ENCODE measurements at regions of chr4 and their contacts with region 1.

Region 1: GRCh38 chr4:1726146-1726934 is 5.0 kb downstream of the TACC3 start:
- DNase-seq: peak; percentile 64 to 88
- ATAC-seq: peak; percentile 67 to 74
- H3K4me3 ChIP-seq: no peak overlapping the region
- H3K27ac ChIP-seq: peak overlapping the region in 3 of 4 donors; percentile 35 to 65 (median 61)
- H3K4me1 ChIP-seq: peaks cover 9 to 11% of the 10 kb centered on the region in 2 donors
- H3K27me3 ChIP-seq: no peaks in the 10 kb centered on the region
- CTCF ChIP-seq: peak; percentile 86 to 98 (median 93)
- POLR2A ChIP-seq: no peak

Region 2: DNA sequence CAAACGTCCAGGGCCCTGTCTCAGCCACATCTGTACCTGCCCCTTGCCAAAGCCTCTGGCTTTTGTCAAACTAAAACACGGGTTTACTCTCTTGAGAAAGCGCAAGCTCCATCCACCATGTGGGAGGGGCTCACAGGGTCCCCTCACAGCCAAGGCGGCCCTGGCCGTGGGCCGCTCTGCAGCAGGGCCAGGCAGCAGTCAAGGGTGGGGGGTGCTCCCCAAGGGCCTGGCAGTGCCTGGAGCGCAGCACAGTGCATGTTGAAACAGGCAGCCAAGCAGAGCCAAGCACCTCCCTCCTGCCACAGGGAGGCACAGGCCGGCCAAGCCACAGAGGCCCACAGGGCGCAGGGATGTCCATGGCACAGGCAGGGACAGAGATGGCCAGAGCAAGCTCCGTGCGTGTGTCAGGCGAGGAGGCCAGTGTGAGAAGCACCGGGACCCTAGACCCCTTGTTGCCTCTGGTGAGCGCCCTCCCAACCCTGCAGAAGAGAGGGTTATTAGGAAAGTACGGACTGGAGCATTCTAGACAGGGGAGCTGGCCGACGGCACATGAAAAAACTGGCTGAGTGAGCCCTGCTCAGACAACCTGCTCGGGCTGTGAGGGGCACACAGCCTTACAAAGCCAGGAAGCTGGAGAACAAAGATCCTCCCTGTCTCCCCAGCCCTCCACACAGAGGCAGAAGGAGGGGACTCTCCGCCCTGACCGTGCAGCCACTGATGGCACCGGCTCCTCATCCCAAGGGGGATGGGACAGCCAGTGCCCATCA is 81.3 kb before region 1 on chr4:
- in situ Hi-C with region 1: no loop called
- intact Hi-C with region 1: no loop called
- DNase-seq: no peak
- ATAC-seq: peak in 1 of 2 donors; percentile 46
- H3K4me3 ChIP-seq: no peak overlapping the region
- H3K27ac ChIP-seq: no peak overlapping the region
- H3K4me1 ChIP-seq: no peaks in the 10 kb centered on the region
- H3K27me3 ChIP-seq: no peaks in the 10 kb centered on the region
- CTCF ChIP-seq: no peak
- POLR2A ChIP-seq: no peak

Region 3: GRCh38 chr4:1683736-1684505 is 42.4 kb before region 1 on chr4 and contains the start of gene FAM53A:
- in situ Hi-C with region 1: loop called in 1 of 4 experiments (anchors 5 kb)
- intact Hi-C with region 1: no loop called
- DNase-seq: peak in 1 of 2 donors; percentile 79
- ATAC-seq: peak; percentile 85 to 86
- H3K4me3 ChIP-seq: peak within 1 kb of the TSS; percentile 62 to 85 (median 71)
- H3K27ac ChIP-seq: peak within 1 kb of the TSS; percentile 68 to 86 (median 80)
- H3K4me1 ChIP-seq: peaks cover 0 to 11% of the 10 kb centered on the region in 2 donors
- H3K27me3 ChIP-seq: no peaks in the 10 kb centered on the region
- CTCF ChIP-seq: peak in 4 of 5 experiments; percentile 17 to 39 (median 26)
- POLR2A ChIP-seq: peak; percentile 64 to 68
- total RNA-seq, gene FAM53A: 1.8 to 5.2 (median 2.8) TPM

Region 4: GRCh38 chr4:1693129-1693896 is 33.0 kb before region 1 on chr4:
- in situ Hi-C with region 1: loop called in 2 of 4 experiments (anchors 5 kb)
- intact Hi-C with region 1: loop called (anchors 1 kb)
- DNase-seq: peak; percentile 66 to 80
- ATAC-seq: peak; percentile 92 to 98
- H3K4me3 ChIP-seq: peak overlapping the region in 1 of 4 donors; percentile 33
- H3K27ac ChIP-seq: peak overlapping the region; percentile 48 to 68 (median 60)
- H3K4me1 ChIP-seq: peaks cover 13 to 14% of the 10 kb centered on the region in 2 donors
- H3K27me3 ChIP-seq: no peaks in the 10 kb centered on the region
- CTCF ChIP-seq: peak; percentile 90 to 94 (median 91)
- POLR2A ChIP-seq: no peak

Region 5: GRCh38 chr4:1712216-1713002 is 13.9 kb before region 1 on chr4 and contains the start of gene SLBP:
- in situ Hi-C with region 1: no loop called
- intact Hi-C with region 1: loop called (anchors 1 kb)
- DNase-seq: peak; percentile 93 to 94
- ATAC-seq: peak; percentile 87 to 89
- H3K4me3 ChIP-seq: peak within 1 kb of the TSS; percentile 66 to 77 (median 74)
- H3K27ac ChIP-seq: peak within 1 kb of the TSS; percentile 91 to 96 (median 95)
- H3K4me1 ChIP-seq: peaks cover 18 to 25% of the 10 kb centered on the region in 2 donors
- H3K27me3 ChIP-seq: no peaks in the 10 kb centered on the region
- CTCF ChIP-seq: peak in 1 of 5 experiments; percentile 24
- POLR2A ChIP-seq: peak; percentile 94 to 95
- total RNA-seq, gene SLBP: 17.0 to 25.6 (median 21.0) TPM

Region 6: DNA sequence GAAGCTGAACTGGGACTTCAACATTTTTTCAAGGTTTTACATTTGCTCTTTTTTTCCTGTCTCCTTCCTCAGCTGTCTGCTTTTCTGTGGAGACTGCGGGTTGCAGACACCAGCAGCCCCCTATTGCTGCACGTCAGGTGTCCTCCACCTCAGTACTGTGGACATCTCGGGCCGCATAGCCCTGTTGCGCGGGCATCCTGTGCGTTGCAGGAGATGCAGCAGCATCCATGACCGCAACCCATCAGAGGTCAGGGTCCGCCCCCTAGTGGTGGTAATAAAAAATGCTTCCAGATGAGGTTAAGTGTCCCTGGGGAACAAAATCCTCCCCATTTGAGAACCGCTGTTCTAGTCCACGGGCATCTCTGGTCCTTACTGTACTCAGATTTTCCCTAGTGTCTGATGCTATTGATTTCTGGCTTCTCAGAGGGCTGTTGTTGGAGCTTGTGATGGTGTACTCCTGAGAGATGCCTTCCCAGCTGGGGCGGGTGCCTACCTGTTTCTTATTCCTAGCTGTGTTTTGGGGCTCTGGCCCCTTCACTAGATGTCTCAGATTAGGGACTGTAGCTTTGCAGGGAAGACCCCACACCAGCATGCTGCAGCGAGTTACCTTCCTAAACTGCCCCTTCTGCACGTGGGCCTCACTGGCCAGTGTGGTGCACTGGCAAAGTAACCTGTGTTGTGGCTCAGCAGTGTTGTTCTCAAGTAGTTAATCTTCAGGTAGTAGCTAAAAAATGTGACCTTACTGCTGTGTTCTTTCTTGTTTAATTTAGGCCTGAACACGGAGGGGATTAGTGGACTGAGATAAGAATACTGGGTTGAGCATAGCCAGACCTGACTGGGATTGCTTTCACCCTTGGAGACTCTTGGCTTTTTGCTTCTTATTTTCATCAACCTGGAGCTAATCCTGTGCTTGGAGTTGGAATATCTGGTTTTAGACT is 173.1 kb after region 1 on chr4:
- in situ Hi-C with region 1: loop called in 1 of 4 experiments (anchors 25 kb)
- intact Hi-C with region 1: no loop called
- DNase-seq: peak; percentile 42 to 54
- ATAC-seq: peak; percentile 86 to 94
- H3K4me3 ChIP-seq: no peak overlapping the region
- H3K27ac ChIP-seq: no peak overlapping the region
- H3K4me1 ChIP-seq: no peaks in the 10 kb centered on the region
- H3K27me3 ChIP-seq: no peaks in the 10 kb centered on the region
- CTCF ChIP-seq: peak; percentile 69 to 91 (median 87)
- POLR2A ChIP-seq: no peak